Gastrocnemius medialis (tissue), 4 donors: ENCODE measurements at regions of chr16 and their contacts with region 1.

Region 1: GRCh38 chr16:57648590-57649442 is 19.3 kb upstream of the ADGRG3 start:
- DNase-seq: peak; percentile 25 to 53
- ATAC-seq: peak; percentile 47 to 58
- H3K4me3 ChIP-seq: no peak overlapping the region
- H3K27ac ChIP-seq: peak overlapping the region; percentile 40 to 77 (median 73)
- H3K4me1 ChIP-seq: peaks cover 0 to 4% of the 10 kb centered on the region in 2 donors
- H3K27me3 ChIP-seq: peaks cover 0 to under 1% (median 0%) of the 10 kb centered on the region in 3 donors
- CTCF ChIP-seq: peak; percentile 89 to 98 (median 92)
- POLR2A ChIP-seq: no peak

Region 2: GRCh38 chr16:57576429-57576870 is 72.4 kb before region 1 on chr16:
- in situ Hi-C with region 1: no loop called
- intact Hi-C with region 1: loop called (anchors 1 kb)
- DNase-seq: peak in 1 of 2 donors; percentile 29
- ATAC-seq: peak; percentile 47 to 62
- H3K4me3 ChIP-seq: no peak overlapping the region
- H3K27ac ChIP-seq: no peak overlapping the region
- H3K4me1 ChIP-seq: no peaks in the 10 kb centered on the region
- H3K27me3 ChIP-seq: peaks cover 0 to 9% (median 0%) of the 10 kb centered on the region in 3 donors
- CTCF ChIP-seq: peak; percentile 38 to 88 (median 75)
- POLR2A ChIP-seq: no peak

Region 3: DNA sequence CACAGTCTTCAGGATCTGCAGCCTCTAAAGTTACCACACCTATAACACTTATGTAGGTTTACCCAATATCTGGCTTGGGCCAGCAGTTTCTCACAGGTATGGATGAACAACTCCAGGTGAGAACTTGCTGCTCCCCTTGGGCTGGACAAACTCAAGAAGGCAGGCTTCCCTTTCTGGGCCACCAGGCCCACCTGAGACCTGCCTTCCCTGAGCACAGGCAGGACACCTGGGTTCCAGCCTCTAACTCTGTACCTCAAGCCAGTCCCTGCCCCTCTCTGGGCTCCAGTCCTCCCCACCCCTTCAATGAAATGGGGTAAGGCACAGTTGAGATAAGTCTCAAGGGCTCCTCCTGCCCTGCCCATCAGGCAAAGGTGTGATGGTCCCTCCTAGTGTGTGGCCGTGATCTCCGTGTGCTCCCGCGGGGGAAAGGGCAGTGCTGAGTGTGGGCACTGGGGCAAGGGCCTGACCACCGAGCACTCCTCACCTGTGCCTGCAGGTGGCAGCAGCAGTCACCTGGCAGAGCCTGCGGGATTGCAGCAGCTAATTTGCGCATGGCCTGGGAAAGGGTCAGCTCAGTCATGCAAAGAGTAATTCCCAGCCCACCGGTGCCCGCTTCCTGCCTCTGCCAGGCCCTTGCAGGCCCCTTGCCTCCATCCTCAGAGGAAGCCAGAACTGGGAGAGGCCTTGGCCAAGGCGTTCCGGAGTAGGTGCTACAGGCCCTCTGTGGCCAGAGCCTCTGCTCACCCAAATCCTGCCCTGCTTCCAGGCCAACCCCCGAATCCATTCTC is 48.6 kb before region 1 on chr16:
- in situ Hi-C with region 1: no loop called
- intact Hi-C with region 1: loop called (anchors 5 kb)
- DNase-seq: no peak
- ATAC-seq: no peak
- H3K4me3 ChIP-seq: no peak overlapping the region
- H3K27ac ChIP-seq: no peak overlapping the region
- H3K4me1 ChIP-seq: no peaks in the 10 kb centered on the region
- H3K27me3 ChIP-seq: peaks cover 0 to 9% (median 2%) of the 10 kb centered on the region in 3 donors
- CTCF ChIP-seq: peak; percentile 27 to 57 (median 46)
- POLR2A ChIP-seq: no peak

Region 4: GRCh38 chr16:57637424-57637823 is 11.4 kb before region 1 on chr16:
- in situ Hi-C with region 1: no loop called
- intact Hi-C with region 1: loop called (anchors 1 kb)
- DNase-seq: peak; percentile 16 to 25
- ATAC-seq: peak; percentile 68 to 72
- H3K4me3 ChIP-seq: no peak overlapping the region
- H3K27ac ChIP-seq: peak overlapping the region; percentile 63 to 80 (median 77)
- H3K4me1 ChIP-seq: peaks cover 0 to 5% of the 10 kb centered on the region in 2 donors
- H3K27me3 ChIP-seq: no peaks in the 10 kb centered on the region
- CTCF ChIP-seq: no peak
- POLR2A ChIP-seq: peak in 1 of 2 donors; percentile 28